ENCODE measurements at regions of chr2 and their contacts with region 1.

Region 1: GRCh38 chr2:121356058-121356640 is 71.1 kb upstream of the TFCP2L1 start:
- DNase-seq: no peak
- H3K4me3 ChIP-seq: no peak overlapping the region
- CTCF ChIP-seq: peak; percentile 66

Region 2: GRCh38 chr2:121088251-121089165 is 267.6 kb before region 1 on chr2:
- CTCF ChIA-PET with region 1: interaction called, 95 read pairs
- POLR2A ChIA-PET with region 1: interaction called, 3 read pairs
- DNase-seq: no peak
- H3K4me3 ChIP-seq: no peak overlapping the region
- CTCF ChIP-seq: no peak

Region 3: GRCh38 chr2:121095257-121096080 is 260.7 kb before region 1 on chr2:
- CTCF ChIA-PET with region 1: interaction called, 95 read pairs
- POLR2A ChIA-PET with region 1: interaction called, 3 read pairs
- DNase-seq: no peak
- H3K4me3 ChIP-seq: no peak overlapping the region
- CTCF ChIP-seq: peak; percentile 88

Region 4: DNA sequence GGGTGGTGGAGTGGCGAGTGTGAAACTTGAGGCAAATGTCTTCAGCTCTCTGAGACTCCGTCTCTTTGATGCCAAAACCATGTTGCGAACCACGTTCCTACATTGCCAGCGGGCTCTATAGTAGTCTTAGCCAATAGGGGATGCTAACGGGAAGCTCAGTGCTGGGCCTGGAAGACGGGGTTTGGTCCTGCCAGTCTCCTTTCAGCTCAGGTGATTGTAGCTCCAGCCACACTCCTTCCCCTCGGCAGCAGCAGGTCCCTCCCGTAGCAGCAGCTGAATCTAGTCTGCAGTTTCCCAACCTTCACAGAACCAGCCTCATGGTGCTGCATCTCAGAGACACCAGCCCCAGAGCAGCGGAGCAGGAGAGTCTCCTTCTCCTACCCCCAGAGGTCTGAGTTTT is 180.8 kb before region 1 on chr2:
- CTCF ChIA-PET with region 1: no interaction called
- POLR2A ChIA-PET with region 1: no interaction called
- DNase-seq: no peak
- H3K4me3 ChIP-seq: no peak overlapping the region
- CTCF ChIP-seq: no peak

Region 5: GRCh38 chr2:121335294-121336290 is 20.6 kb before region 1 on chr2:
- CTCF ChIA-PET with region 1: interaction called, 21 read pairs
- POLR2A ChIA-PET with region 1: no interaction called
- DNase-seq: no peak
- H3K4me3 ChIP-seq: no peak overlapping the region
- CTCF ChIP-seq: no peak

Region 6: GRCh38 chr2:121345887-121346286 is 10.3 kb before region 1 on chr2:
- CTCF ChIA-PET with region 1: interaction called, 30 read pairs
- POLR2A ChIA-PET with region 1: no interaction called
- DNase-seq: no peak
- H3K4me3 ChIP-seq: no peak overlapping the region
- CTCF ChIP-seq: no peak

Region 7: GRCh38 chr2:121377646-121378045 is 21.5 kb after region 1 on chr2:
- CTCF ChIA-PET with region 1: interaction called, 14 read pairs
- POLR2A ChIA-PET with region 1: no interaction called
- DNase-seq: no peak
- H3K4me3 ChIP-seq: no peak overlapping the region
- CTCF ChIP-seq: no peak

Measured in AG04449 (cell line).